ENCODE measurements at regions of chr13 and their contacts with region 1.

Region 1: GRCh38 chr13:113552786-113553432 is 31.6 kb upstream of the TFDP1 start:
- DNase-seq: peak; percentile 12
- H3K4me3 ChIP-seq: no peak overlapping the region
- H3K27ac ChIP-seq: no peak overlapping the region
- H3K4me1 ChIP-seq: peaks cover 3% of the 10 kb centered on the region
- H3K27me3 ChIP-seq: no peaks in the 10 kb centered on the region
- CTCF ChIP-seq: no peak
- POLR2A ChIP-seq: no peak

Region 2: DNA sequence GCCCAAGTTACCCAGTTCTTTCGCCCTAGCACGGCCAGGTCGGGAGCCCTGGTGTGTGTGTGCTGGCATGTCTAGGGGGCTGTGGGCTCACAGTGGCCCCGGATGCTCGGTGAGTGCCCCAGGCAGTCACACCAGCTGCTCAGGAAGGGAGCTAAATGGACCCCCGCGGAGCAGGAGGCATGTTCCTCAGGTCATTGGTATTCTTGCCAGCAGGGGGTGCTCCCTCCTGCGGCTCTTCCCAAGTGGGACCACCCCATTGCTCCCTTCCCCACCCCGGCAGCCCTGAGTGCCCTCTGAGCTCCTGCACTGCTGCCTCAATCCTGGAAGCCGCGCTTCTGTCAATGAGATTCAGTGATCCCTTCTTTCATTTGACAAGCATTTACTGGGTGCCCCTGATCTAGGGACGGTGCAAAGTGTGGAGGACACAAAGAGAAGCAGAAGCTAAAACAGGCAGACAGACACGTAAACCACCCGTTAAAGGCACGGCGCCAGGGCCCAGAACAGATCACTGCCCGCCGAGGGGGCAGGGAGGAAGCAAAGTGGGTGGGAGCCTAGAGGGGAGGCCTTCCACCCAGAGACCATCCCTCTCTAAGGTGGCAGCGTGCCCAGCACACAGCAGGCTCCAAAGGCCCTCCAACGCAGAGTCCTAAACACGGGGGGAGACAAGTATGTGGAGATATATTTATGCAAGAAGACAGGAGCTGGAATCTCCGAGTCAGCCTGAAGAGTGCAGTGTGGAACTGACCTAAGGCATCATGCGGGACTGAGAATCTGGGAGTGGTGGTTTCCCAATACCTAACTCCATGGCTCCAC is 94.5 kb before region 1 on chr13:
- intact Hi-C with region 1: loop called (anchors 10 kb)
- DNase-seq: peak; percentile 51
- H3K4me3 ChIP-seq: no peak overlapping the region
- H3K27ac ChIP-seq: no peak overlapping the region
- H3K4me1 ChIP-seq: peaks cover under 1% of the 10 kb centered on the region
- H3K27me3 ChIP-seq: no peaks in the 10 kb centered on the region
- CTCF ChIP-seq: peak; percentile 32 to 42 (median 34)
- POLR2A ChIP-seq: no peak

Region 3: GRCh38 chr13:113863436-113864272 is 310.7 kb after region 1 on chr13 and contains the start of gene GAS6:
- intact Hi-C with region 1: no loop called
- DNase-seq: peak; percentile 77
- H3K4me3 ChIP-seq: peak within 1 kb of the TSS; percentile 79 to 84
- H3K27ac ChIP-seq: peak within 1 kb of the TSS; percentile 72 to 85
- H3K4me1 ChIP-seq: peaks cover 34% of the 10 kb centered on the region
- H3K27me3 ChIP-seq: no peaks in the 10 kb centered on the region
- CTCF ChIP-seq: no peak
- POLR2A ChIP-seq: no peak
- total RNA-seq, gene GAS6: 416 to 575 TPM

Measured in testis (tissue), 5 donors.